RWPE1 (cell line): ENCODE measurements at regions of chr6 and their contacts with region 1.

Region 1: DNA sequence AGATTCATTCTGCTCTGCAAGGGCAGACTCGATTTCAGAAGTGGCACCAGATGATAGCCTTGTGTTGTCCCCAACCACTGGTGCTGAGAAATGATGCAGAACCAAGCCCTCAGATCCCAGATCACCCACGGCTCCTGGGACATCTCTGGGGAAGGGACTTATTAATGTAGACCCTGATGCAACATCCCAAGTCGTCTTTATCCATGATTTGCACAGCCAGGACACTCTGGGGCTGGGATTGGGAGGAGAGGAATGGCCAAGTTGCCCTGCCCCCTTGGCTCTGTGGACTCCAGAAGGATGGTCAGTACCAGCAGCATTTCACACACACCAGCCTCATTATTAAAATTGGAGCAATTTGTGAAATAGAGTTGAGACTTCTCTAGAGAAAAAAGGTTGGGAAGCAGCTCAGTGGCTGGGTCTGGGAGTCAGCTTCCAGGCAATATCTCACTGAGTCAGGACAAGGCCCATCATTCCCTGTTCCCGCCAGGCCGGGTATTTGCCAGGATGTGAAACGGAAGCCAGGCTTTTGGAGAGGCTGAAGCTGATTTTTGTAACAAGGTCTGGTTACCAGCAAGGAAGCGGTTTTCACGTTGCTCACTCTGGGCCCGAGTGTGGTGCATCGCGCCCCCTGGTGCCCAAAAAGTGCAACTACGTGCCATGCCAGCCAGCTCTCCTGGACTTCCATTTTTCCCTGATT is 67.4 kb downstream of the ZBTB2 start:
- DNase-seq: peak; percentile 60
- H3K27ac ChIP-seq: no peak overlapping the region
- CTCF ChIP-seq: peak; percentile 95

Region 2: DNA sequence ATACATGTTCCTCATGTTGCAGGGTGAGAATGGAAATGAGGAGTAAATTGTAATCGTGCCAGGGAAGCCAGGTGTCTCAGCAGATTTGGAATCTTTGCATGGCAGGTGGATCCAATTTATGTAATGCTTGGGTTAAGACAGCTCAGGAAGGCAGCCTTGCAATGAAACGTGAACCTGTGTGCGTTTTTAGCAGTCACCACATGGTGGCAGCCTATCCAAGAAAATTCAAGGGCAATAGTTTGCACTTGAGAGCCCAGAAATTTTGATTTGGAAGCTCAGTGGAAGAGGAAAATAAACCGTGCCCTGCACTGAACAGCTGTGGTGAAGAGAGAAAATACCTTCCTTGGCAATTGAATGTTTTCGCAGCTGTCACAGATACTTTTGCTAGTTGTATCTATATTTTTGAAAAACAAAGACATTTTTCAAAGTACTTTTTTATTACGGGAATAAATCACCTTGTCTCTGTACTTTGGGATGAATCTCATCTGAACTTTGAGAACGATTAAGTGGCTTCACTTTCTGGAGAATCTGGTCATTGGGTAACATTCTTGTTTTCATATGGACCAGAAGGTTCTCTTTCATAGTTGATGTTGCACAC is 432.0 kb before region 1 on chr6:
- CTCF ChIA-PET with region 1: interaction called, 17 read pairs
- POLR2A ChIA-PET with region 1: no interaction called
- DNase-seq: peak; percentile 43
- H3K27ac ChIP-seq: no peak overlapping the region
- CTCF ChIP-seq: peak; percentile 83

Region 3: GRCh38 chr6:151014404-151015100 is 309.4 kb before region 1 on chr6:
- CTCF ChIA-PET with region 1: interaction called, 79 read pairs
- POLR2A ChIA-PET with region 1: no interaction called
- DNase-seq: peak; percentile 60
- H3K27ac ChIP-seq: no peak overlapping the region
- CTCF ChIP-seq: peak; percentile 97

Region 4: DNA sequence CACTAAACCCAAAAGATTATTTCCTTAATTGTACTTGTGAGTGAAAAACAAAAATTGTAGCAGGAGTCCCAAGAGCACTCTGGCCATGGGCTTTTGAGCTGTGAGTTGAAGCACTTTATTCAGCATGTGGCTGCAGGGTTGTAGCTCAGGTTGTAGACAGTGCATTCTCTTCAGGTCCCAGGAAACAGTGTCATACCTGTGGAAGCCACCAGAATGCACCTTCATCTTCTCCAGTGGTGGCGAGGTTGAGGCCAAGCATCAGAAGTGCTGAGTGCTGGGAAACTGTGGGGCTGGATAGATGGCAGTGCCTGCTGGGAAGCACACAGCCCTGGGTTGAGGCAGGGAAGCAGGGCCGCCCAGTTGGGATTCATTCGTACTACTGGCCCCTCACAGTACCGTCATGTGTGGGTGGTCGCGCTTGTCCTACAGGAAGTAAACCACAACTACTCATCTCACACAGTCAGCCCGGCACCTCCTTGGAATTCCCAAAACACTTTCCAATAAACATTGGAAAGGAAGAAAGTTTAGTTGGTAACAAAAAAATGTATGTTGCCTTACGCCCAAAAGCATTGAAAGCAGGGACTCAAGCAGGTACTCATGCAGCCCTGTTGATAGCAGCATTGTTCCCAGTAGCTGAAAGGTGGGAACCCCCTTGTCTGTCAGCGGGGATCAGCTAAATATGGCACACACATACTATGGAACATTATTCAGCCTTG is 296.0 kb before region 1 on chr6:
- CTCF ChIA-PET with region 1: interaction called, 10 read pairs
- POLR2A ChIA-PET with region 1: no interaction called
- DNase-seq: no peak
- H3K27ac ChIP-seq: no peak overlapping the region
- CTCF ChIP-seq: no peak

Region 5: GRCh38 chr6:151313066-151313491 is 10.9 kb before region 1 on chr6:
- CTCF ChIA-PET with region 1: interaction called, 13 read pairs
- POLR2A ChIA-PET with region 1: no interaction called
- DNase-seq: no peak
- H3K27ac ChIP-seq: no peak overlapping the region
- CTCF ChIP-seq: no peak

Region 6: GRCh38 chr6:151335930-151336329 is 12.0 kb after region 1 on chr6:
- CTCF ChIA-PET with region 1: interaction called, 18 read pairs
- POLR2A ChIA-PET with region 1: no interaction called
- DNase-seq: no peak
- H3K27ac ChIP-seq: no peak overlapping the region
- CTCF ChIP-seq: no peak

Region 7: DNA sequence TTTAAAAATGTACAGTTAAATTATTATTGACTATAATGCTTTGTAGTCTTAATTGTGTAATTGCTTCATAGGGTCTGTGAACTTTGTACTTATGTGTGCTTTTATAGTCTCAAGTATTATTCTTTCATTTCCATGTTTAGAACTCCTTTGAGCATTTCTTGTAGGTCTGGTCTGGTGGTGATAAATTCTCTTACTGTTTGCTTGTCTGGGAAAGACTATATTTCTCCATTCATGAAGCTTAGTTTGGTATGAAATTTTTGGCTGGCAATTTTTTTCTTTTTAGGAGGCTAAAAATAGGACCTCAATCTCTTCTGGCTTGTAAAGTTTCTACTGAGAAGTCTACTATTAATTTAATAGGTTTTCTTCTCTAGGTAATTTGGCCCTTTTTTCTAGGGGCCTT is 237.3 kb after region 1 on chr6:
- CTCF ChIA-PET with region 1: no interaction called
- POLR2A ChIA-PET with region 1: no interaction called
- DNase-seq: no peak
- H3K27ac ChIP-seq: no peak overlapping the region
- CTCF ChIP-seq: no peak